Transverse colon (tissue), 4 donors: ENCODE measurements at regions of chr14 and their contacts with region 1.

Region 1: DNA sequence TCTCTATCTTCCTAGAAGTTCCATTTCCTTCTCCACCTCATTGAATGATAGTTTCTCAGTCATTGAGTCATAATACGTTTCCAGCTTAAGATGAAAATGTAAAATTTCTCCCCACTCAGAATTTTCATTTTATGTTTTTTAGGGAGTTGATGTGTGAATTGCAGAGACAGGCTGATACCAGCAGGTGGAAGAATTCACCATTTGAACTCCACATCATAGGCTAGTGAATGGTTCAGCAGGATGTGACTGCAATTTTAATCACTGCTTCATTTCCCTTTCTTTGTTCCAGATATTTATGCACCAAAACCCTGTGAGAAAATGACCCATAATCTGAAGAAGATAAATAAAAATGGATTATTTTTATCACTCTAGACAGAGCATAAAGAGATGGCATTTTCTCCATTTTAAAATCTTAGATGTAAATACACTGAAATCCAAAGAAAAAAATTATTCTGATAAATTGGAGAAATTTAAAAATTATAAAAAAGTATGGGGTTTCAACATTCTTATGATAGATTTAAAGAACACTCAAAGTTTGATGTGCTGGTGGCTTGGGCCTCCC is 10.6 kb upstream of the PYGL start:
- DNase-seq: no peak
- H3K4me3 ChIP-seq: no peak overlapping the region
- H3K27ac ChIP-seq: peak overlapping the region; percentile 34 to 63 (median 47)
- H3K4me1 ChIP-seq: peaks cover 0 to 12% (median 2%) of the 10 kb centered on the region in 4 donors
- H3K27me3 ChIP-seq: no peaks in the 10 kb centered on the region
- CTCF ChIP-seq: peak; percentile 53 to 75 (median 55)
- EP300 ChIP-seq: no peak
- POLR2A ChIP-seq: no peak

Region 2: GRCh38 chr14:50573858-50574257 is 381.0 kb before region 1 on chr14:
- in situ Hi-C with region 1: no loop called
- intact Hi-C with region 1: no loop called
- DNase-seq: no peak
- H3K4me3 ChIP-seq: no peak overlapping the region
- H3K27ac ChIP-seq: no peak overlapping the region
- H3K4me1 ChIP-seq: peaks cover 0 to 3% (median 0%) of the 10 kb centered on the region in 4 donors
- H3K27me3 ChIP-seq: no peaks in the 10 kb centered on the region
- CTCF ChIP-seq: no peak
- EP300 ChIP-seq: no peak
- POLR2A ChIP-seq: no peak

Region 3: GRCh38 chr14:51094901-51095853 is 140.3 kb after region 1 on chr14 and contains the start of gene TRIM9:
- in situ Hi-C with region 1: no loop called
- intact Hi-C with region 1: loop called (anchors 10 kb)
- DNase-seq: peak; percentile 96
- H3K4me3 ChIP-seq: peak within 1 kb of the TSS; percentile 38 to 93 (median 52)
- H3K27ac ChIP-seq: peak within 1 kb of the TSS; percentile 70 to 84 (median 80)
- H3K4me1 ChIP-seq: peaks cover 0 to 26% (median 22%) of the 10 kb centered on the region in 4 donors
- H3K27me3 ChIP-seq: peaks cover 28% of the 10 kb centered on the region
- CTCF ChIP-seq: no peak
- EP300 ChIP-seq: no peak
- POLR2A ChIP-seq: peak; percentile 25
- total RNA-seq, gene TRIM9: 9.2 to 21.3 (median 16.1) TPM

Region 4: GRCh38 chr14:51219473-51220448 is 264.9 kb after region 1 on chr14:
- in situ Hi-C with region 1: loop called in 3 of 4 experiments (anchors 10 to 25 kb)
- intact Hi-C with region 1: no loop called
- DNase-seq: no peak
- H3K4me3 ChIP-seq: no peak overlapping the region
- H3K27ac ChIP-seq: no peak overlapping the region
- H3K4me1 ChIP-seq: no peaks in the 10 kb centered on the region
- H3K27me3 ChIP-seq: no peaks in the 10 kb centered on the region
- CTCF ChIP-seq: peak; percentile 58 to 65 (median 61)
- EP300 ChIP-seq: no peak
- POLR2A ChIP-seq: no peak

Region 5: DNA sequence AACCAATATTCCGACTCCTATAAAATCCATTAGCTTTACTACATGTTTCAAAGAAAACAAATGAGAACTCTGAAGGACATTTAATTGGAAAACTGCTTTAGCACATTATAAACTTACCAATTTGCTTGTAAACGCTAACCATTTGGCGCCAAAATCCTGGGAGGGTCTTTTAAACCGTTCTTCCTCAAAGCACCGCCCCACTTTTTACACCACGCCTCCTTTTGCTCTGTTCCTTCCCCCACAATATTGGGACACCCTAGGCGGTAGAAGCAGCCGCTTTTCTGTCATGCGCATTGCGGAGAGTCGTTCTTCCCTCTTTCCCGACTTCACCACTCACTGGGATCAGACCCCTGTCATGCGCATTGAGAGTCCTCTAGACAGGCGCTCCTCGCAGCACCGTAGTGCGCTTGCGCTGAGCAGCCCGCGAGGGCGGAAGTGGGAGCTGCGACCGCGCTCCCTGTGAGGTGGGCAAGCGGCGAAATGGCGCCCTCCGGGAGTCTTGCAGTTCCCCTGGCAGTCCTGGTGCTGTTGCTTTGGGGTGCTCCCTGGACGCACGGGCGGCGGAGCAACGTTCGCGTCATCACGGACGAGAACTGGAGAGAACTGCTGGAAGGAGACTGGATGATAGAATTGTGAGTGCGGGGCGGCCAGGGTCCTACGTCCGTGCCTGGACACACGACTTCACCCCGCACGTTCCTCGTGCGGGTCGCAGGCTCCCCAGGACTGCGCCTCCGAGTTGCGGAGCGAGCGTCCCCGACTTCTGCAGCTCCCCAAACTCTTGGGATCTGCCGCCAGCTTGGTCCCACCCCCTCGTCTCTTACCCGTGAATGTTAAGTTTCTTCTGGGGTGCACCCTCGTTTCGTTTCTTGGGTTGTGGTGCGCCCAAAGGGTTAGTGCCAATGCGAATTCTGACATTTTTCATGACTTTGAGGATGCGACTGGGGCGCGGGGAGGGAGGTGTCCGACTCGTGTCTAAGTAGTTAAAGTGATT is 285.2 kb after region 1 on chr14 and contains the start of gene TMX1:
- in situ Hi-C with region 1: loop called in 1 of 4 experiments (anchors 25 kb)
- intact Hi-C with region 1: no loop called
- DNase-seq: peak; percentile 95
- H3K4me3 ChIP-seq: peak within 1 kb of the TSS; percentile 91 to 98 (median 94)
- H3K27ac ChIP-seq: peak within 1 kb of the TSS; percentile 88 to 94 (median 90)
- H3K4me1 ChIP-seq: peaks cover 6 to 29% (median 13%) of the 10 kb centered on the region in 4 donors
- H3K27me3 ChIP-seq: no peaks in the 10 kb centered on the region
- CTCF ChIP-seq: no peak
- EP300 ChIP-seq: no peak
- POLR2A ChIP-seq: peak; percentile 92
- total RNA-seq, gene TMX1: 8.0 to 44.5 (median 35.1) TPM